Left cardiac atrium (tissue), 4 donors: ENCODE measurements at regions of chr5 and their contacts with region 1.

Region 1: DNA sequence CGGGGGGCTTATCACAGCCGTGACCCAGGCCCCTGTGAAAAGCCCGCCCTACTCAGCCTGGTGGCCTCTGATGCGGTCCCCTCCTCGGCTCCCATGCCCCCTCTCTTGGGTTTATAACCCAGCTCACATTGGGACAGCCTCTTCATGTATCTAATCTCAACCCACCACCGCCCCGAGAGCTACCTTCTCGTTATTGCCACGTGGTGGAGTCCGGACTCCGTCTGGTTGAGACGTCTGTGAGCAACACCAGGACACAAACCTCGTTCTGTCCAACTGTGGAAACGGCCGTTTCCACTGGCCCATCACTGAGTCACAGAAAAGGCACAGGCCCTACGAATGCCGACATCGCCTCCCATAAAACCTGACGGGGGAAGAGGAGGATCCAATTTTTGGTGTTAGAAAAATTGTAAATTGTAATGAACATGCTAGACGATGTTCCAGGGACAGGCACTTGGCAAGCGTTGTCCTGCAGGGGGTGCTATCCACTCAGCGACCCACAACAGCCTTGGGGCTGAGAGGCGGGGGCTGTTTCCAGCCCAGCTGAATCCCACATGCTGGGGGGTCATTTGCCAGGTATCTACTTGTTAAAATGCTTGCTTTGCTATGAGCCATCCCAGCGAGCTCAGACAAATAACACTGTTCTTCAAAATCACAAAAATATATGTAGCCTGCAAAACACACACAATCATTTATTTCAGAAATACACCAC is 37.3 kb upstream of the N4BP3 start:
- DNase-seq: peak; percentile 68
- ATAC-seq: peak; percentile 84 to 88

Region 2: GRCh38 chr5:178146020-178146820 is 70.2 kb after region 1 on chr5:
- intact Hi-C with region 1: loop called in 1 of 2 experiments (anchors 5 kb)
- DNase-seq: peak; percentile 59
- ATAC-seq: peak in 1 of 2 donors; percentile 44

Region 3: GRCh38 chr5:178163772-178164735 is 88.1 kb after region 1 on chr5:
- intact Hi-C with region 1: loop called (anchors 1 to 5 kb)
- DNase-seq: peak; percentile 81
- ATAC-seq: peak; percentile 94 to 97